ENCODE measurements at regions of chr1 and their contacts with region 1.

Region 1: DNA sequence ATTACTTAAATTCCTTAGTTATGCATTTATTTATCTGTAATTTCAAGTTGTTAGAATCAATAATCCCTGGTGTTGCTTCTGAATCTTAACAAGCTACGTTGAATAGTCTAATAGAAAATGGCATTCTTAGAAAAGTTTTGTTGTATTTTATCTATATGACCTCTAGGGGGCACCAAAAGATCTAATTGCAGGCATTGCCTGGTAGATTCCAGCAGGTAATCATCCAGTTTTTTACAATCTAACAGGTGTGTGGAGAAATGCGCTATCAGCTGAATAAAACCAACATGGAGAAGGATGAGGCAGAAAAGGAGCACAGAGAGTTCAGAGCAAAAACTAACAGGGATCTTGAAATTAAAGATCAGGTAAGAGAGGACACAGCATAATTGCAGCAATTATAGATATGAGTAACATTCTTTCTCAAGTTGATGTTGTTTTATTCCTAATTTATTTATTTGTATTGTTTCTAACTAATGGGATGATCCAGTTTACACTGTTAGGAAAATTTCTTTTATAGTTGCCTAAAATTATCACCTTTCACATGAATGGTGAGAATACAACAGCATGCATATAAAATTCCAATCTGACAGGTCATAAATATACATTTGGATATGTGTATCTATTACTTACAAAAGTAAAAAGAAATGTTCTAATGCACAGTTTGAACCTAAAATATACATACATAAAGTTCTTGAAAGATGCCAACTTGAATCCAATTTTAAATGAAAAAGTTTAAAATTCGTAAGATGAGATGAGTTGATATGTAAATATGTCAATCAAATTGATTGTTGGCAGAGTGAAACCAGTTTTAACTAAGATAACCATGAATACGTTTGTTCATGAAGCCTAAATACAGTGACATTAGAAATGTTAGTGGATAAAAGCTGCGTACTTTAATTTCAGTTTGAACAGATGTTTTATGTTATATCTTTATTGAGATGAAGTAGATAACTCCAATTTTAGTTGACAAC is 88.4 kb downstream of the SDCCAG8 start:
- DNase-seq: no peak
- H3K4me3 ChIP-seq: no peak overlapping the region
- H3K27ac ChIP-seq: no peak overlapping the region
- H3K4me1 ChIP-seq: no peaks in the 10 kb centered on the region
- H3K27me3 ChIP-seq: no peaks in the 10 kb centered on the region
- CTCF ChIP-seq: peak; percentile 68 to 70 (median 69)
- EP300 ChIP-seq: no peak
- POLR2A ChIP-seq: no peak

Region 2: GRCh38 chr1:243332440-243332839 is 11.8 kb before region 1 on chr1:
- intact Hi-C with region 1: no loop called
- DNase-seq: no peak
- H3K4me3 ChIP-seq: no peak overlapping the region
- H3K27ac ChIP-seq: no peak overlapping the region
- H3K4me1 ChIP-seq: no peaks in the 10 kb centered on the region
- H3K27me3 ChIP-seq: no peaks in the 10 kb centered on the region
- CTCF ChIP-seq: no peak
- EP300 ChIP-seq: no peak
- POLR2A ChIP-seq: no peak

Region 3: GRCh38 chr1:243748706-243749283 is 404.5 kb after region 1 on chr1:
- intact Hi-C with region 1: loop called (anchors 10 kb)
- DNase-seq: no peak
- H3K4me3 ChIP-seq: no peak overlapping the region
- H3K27ac ChIP-seq: no peak overlapping the region
- H3K4me1 ChIP-seq: peaks cover 0 to 46% (median 17%) of the 10 kb centered on the region in 4 donors
- H3K27me3 ChIP-seq: no peaks in the 10 kb centered on the region
- CTCF ChIP-seq: peak; percentile 69 to 84 (median 80)
- EP300 ChIP-seq: no peak
- POLR2A ChIP-seq: no peak

Region 4: DNA sequence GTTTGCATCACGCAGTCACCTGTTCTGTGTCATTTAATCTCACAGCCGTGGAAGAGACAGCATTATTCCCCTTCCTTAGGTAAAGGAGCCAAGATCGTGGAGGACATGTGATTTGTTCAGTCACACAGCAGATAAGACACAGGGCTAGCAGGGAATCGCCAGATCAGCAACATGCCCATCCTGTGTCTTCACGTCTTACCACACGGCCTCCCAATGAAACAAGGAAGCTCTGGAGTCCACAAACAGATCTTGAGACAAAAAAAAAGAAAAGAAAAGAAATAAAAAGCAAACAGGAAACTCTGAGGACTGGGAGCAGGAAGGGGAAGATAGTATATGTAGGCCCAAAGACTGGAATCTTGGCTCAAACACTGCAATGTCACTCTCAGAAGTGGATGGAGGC is 952.2 kb after region 1 on chr1:
- intact Hi-C with region 1: loop called (anchors 5 kb)
- DNase-seq: no peak
- H3K4me3 ChIP-seq: no peak overlapping the region
- H3K27ac ChIP-seq: no peak overlapping the region
- H3K4me1 ChIP-seq: peaks cover 0 to 12% (median 9%) of the 10 kb centered on the region in 4 donors
- H3K27me3 ChIP-seq: no peaks in the 10 kb centered on the region
- CTCF ChIP-seq: no peak
- EP300 ChIP-seq: no peak
- POLR2A ChIP-seq: no peak

Measured in esophagus muscularis mucosa (tissue), 4 donors.